PC-9 (cell line): ENCODE measurements at regions of chr1 and their contacts with region 1.

Region 1: GRCh38 chr1:43934101-43934985 is 742 bp downstream of the ARTN start:
- DNase-seq: peak; percentile 64 to 90
- H3K4me3 ChIP-seq: peak overlapping the region; percentile 90
- H3K27ac ChIP-seq: peak overlapping the region; percentile 84
- H3K4me1 ChIP-seq: peaks cover 43% of the 10 kb centered on the region
- H3K27me3 ChIP-seq: no peaks in the 10 kb centered on the region
- CTCF ChIP-seq: peak; percentile 90

Region 2: DNA sequence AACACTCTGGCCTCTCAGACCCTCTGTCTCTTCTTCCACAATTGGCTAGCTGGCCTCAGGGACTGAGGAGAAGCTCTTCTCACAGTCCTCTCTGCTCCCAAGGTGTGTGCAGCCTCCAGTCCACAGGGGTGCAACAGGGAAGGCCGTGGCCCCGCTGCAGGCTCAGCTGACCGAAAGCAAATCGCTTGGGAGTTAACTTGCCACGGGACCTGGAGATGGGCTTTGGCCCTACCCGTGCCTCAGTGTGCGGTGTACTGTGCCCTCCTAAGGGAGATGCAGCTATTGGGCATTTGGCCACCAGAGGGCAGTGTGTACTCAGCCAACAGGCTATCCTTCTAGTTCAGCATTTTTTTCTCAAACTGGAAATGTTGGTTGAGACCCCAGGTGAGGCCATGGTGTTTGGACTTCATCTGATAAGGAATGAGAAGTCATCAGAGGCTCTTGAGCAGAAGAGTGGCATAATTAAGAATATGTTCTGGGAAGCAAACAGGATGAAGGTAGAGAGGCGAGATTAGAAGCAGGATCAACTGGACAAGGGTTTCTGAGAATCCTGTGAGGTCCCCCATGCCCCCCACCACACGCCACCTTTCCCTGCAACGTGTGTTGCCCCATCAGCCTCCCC is 707.1 kb before region 1 on chr1:
- CTCF ChIA-PET with region 1: no interaction called
- POLR2A ChIA-PET with region 1: no interaction called
- intact Hi-C with region 1: loop called (anchors 2 kb)
- DNase-seq: peak; percentile 73 to 88
- H3K4me3 ChIP-seq: no peak overlapping the region
- H3K27ac ChIP-seq: no peak overlapping the region
- H3K4me1 ChIP-seq: peaks cover 16% of the 10 kb centered on the region
- H3K27me3 ChIP-seq: no peaks in the 10 kb centered on the region
- CTCF ChIP-seq: peak; percentile 97

Region 3: GRCh38 chr1:43576521-43576920 is 357.8 kb before region 1 on chr1:
- CTCF ChIA-PET with region 1: interaction called, 32 read pairs
- POLR2A ChIA-PET with region 1: no interaction called
- intact Hi-C with region 1: no loop called
- DNase-seq: peak in 1 of 2 experiments; percentile 16
- H3K4me3 ChIP-seq: no peak overlapping the region
- H3K27ac ChIP-seq: no peak overlapping the region
- H3K4me1 ChIP-seq: peaks cover 3% of the 10 kb centered on the region
- H3K27me3 ChIP-seq: no peaks in the 10 kb centered on the region
- CTCF ChIP-seq: no peak

Region 4: GRCh38 chr1:43763497-43763973 is 170.8 kb before region 1 on chr1:
- CTCF ChIA-PET with region 1: interaction called, 185 read pairs
- POLR2A ChIA-PET with region 1: interaction called, 10 read pairs
- intact Hi-C with region 1: loop called (anchors 1 kb)
- DNase-seq: peak; percentile 77 to 80
- H3K4me3 ChIP-seq: no peak overlapping the region
- H3K27ac ChIP-seq: peak overlapping the region; percentile 27
- H3K4me1 ChIP-seq: peaks cover 8% of the 10 kb centered on the region
- H3K27me3 ChIP-seq: no peaks in the 10 kb centered on the region
- CTCF ChIP-seq: peak; percentile 95

Region 5: GRCh38 chr1:43853161-43853921 is 81.0 kb before region 1 on chr1:
- CTCF ChIA-PET with region 1: interaction called, 16 read pairs
- POLR2A ChIA-PET with region 1: interaction called, 8 read pairs
- intact Hi-C with region 1: loop called (anchors 1 kb)
- DNase-seq: peak; percentile 79 to 83
- H3K4me3 ChIP-seq: no peak overlapping the region
- H3K27ac ChIP-seq: peak overlapping the region; percentile 54
- H3K4me1 ChIP-seq: peaks cover 31% of the 10 kb centered on the region
- H3K27me3 ChIP-seq: no peaks in the 10 kb centered on the region
- CTCF ChIP-seq: no peak

Region 6: GRCh38 chr1:44213222-44214112 is 279.1 kb after region 1 on chr1 and contains the start of gene DMAP1:
- CTCF ChIA-PET with region 1: interaction called, 13 read pairs
- POLR2A ChIA-PET with region 1: no interaction called
- intact Hi-C with region 1: no loop called
- DNase-seq: peak; percentile 65 to 80
- H3K4me3 ChIP-seq: peak within 1 kb of the TSS; percentile 86
- H3K27ac ChIP-seq: peak within 1 kb of the TSS; percentile 27; the same call in 1 of the 2 replicates
- H3K4me1 ChIP-seq: peaks cover 17% of the 10 kb centered on the region; the same call in 1 of the 2 replicates
- H3K27me3 ChIP-seq: no peaks in the 10 kb centered on the region
- CTCF ChIP-seq: no peak
- total RNA-seq, gene DMAP1: 54.2 and 68.4 TPM in 2 replicates